ENCODE measurements at regions of chr14 and their contacts with region 1.

Region 1: DNA sequence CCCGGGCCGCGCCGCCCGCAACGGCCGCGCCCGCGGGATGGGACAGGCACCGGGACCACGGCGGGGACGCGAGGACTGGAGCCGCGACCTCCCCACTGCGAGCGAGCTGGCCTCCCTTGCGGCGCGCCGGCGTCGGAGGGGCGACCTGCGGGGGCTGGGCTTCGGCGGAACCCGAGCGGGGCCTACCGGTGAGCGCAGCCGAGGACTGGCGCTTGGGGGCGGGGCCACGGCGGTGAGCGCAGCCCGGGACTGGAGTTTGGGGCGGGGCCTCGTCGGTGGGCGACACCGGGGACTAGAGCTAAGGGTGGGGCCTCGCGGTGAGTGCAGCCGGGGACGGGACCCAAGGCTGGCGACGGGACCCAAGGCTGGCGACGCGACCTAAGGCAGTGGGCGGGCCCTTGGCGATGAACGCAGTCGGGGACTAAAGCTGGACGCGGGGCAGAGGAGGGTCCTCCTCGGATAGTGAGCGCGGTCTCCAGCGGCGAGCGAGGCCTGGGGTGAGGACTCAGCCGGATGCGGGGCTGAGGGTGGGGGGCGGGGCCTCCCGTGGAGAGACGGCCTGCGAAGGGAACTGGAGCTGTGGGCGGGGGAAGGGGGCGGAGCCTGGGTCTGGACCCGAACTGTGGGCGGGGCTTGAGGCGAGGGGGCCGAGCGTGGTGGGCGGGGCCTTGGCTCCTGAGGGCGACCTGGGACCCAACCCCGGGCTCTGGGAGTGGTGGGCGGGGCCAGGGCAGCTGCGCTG is at the start of gene BRF1:
- DNase-seq: peak; percentile 95 to 100 (median 98)
- ATAC-seq: peak; percentile 88
- H3K4me3 ChIP-seq: peak within 1 kb of the TSS; percentile 71
- H3K4me3 Mint-ChIP-seq: peak within 1 kb of the TSS; percentile 98
- H3K27ac ChIP-seq: peak within 1 kb of the TSS; percentile 79 to 88
- H3K27ac Mint-ChIP-seq: peak within 1 kb of the TSS; percentile 85
- H3K4me1 ChIP-seq: peaks cover 37% of the 10 kb centered on the region
- H3K4me1 Mint-ChIP-seq: peaks cover 46% of the 10 kb centered on the region
- H3K27me3 ChIP-seq: no peaks in the 10 kb centered on the region
- H3K27me3 Mint-ChIP-seq: no peaks in the 10 kb centered on the region
- CTCF ChIP-seq: no peak
- total RNA-seq, gene BRF1: 77.4 to 77.7 TPM

Region 2: GRCh38 chr14:105059035-105059924 is 241.7 kb before region 1 on chr14:
- CTCF ChIA-PET with region 1: no interaction called
- POLR2A ChIA-PET with region 1: no interaction called
- intact Hi-C with region 1: no loop called
- DNase-seq: peak in 11 of 14 experiments; percentile 27 to 86 (median 74)
- ATAC-seq: peak; percentile 77
- H3K4me3 ChIP-seq: peak overlapping the region; percentile 82
- H3K4me3 Mint-ChIP-seq: peak overlapping the region; percentile 89
- H3K27ac ChIP-seq: peak overlapping the region; percentile 86 to 95
- H3K27ac Mint-ChIP-seq: peak overlapping the region; percentile 91
- H3K4me1 ChIP-seq: peaks cover 63% of the 10 kb centered on the region
- H3K4me1 Mint-ChIP-seq: peaks cover 53% of the 10 kb centered on the region
- H3K27me3 ChIP-seq: no peaks in the 10 kb centered on the region
- H3K27me3 Mint-ChIP-seq: no peaks in the 10 kb centered on the region
- CTCF ChIP-seq: peak; percentile 35

Region 3: DNA sequence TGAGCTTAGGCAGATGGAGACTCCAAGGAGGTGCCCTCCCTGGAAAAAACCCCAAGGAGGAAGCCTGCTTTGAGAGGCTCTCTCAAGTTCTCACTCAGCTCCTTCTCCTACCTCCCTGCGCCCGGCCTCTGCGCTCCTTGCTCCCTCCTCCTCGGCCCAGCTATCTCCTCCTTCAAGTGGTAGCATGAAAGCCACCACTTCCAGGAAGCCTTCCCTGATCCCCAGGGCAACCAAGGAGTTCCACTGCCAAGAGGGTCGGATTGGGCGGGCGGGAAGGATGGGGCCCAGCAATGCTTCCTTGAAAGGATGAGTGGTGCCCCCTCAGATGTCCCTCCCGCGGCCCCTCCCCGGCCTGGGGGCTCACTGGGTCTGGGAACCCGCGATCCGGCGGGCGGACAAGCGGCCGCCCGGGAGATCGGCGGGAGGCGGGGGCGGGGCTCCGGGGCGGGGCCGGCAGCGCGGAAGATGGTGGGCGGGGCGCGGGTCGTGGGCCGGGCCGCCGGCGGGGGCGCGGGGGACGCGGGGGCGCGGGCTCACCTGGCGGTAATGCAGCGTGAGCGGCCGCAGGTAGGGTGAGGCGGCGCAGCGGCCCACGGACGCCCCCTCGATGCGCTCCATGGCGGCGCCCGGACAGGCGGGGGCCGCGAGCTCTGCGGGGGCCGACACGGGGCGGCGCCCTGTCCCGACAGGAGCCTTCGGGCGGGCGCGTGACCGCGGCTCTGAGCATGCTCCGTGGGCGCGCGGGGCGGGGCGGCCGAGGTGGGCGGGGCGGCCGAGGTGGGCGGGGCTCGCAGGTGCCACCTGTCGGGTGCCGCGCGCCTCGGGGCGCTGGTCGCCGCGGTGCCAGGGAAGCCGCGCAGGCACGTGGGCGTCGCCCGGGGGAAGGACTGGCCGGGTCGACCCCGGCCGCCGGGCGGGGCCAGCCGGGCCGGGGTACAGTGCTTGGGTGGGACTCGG is 120.1 kb before region 1 on chr14 and contains the start of gene NUDT14:
- CTCF ChIA-PET with region 1: no interaction called
- POLR2A ChIA-PET with region 1: interaction called, 6 read pairs
- intact Hi-C with region 1: loop called in 1 of 2 experiments (anchors 1 kb)
- DNase-seq: peak; percentile 73 to 96 (median 88)
- ATAC-seq: peak; percentile 93
- H3K4me3 ChIP-seq: peak within 1 kb of the TSS; percentile 55
- H3K4me3 Mint-ChIP-seq: peak within 1 kb of the TSS; percentile 78
- H3K27ac ChIP-seq: no peak within 1 kb of the TSS
- H3K27ac Mint-ChIP-seq: no peak within 1 kb of the TSS
- H3K4me1 ChIP-seq: peaks cover 45% of the 10 kb centered on the region
- H3K4me1 Mint-ChIP-seq: peaks cover 7% of the 10 kb centered on the region
- H3K27me3 ChIP-seq: no peaks in the 10 kb centered on the region
- H3K27me3 Mint-ChIP-seq: no peaks in the 10 kb centered on the region
- CTCF ChIP-seq: no peak
- total RNA-seq, gene NUDT14: 9.0 to 9.2 TPM

Region 4: DNA sequence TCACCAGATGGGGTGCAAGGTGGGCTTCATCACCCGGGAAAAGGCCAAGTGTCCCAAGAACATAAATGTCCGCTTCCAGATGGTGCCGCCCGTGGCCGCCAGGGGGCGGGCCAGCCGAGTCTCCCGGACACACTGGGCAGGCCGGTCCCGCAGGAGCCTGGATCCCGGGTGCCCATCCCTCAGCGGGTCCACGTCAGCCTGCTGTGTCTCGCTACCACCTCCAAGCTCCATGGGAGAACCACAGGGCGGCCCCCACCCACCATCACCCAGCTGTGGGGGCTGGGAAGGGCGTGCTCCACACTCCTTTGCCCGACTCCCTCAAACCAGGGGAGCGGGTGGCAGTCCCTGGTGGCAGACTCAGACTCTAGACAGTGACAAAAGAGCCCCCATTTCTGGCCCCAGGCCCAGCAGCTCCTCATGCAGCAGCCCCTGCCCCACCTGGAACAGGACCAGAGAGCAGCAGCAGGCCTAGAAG is 97.9 kb before region 1 on chr14:
- CTCF ChIA-PET with region 1: no interaction called
- POLR2A ChIA-PET with region 1: interaction called, 3 read pairs
- intact Hi-C with region 1: loop called in 1 of 2 experiments (anchors 5 kb)
- DNase-seq: peak; percentile 40 to 76 (median 52)
- ATAC-seq: peak; percentile 48
- H3K4me3 ChIP-seq: no peak overlapping the region
- H3K4me3 Mint-ChIP-seq: no peak overlapping the region
- H3K27ac ChIP-seq: no peak overlapping the region
- H3K27ac Mint-ChIP-seq: no peak overlapping the region
- H3K4me1 ChIP-seq: peaks cover 26% of the 10 kb centered on the region
- H3K4me1 Mint-ChIP-seq: peaks cover 9% of the 10 kb centered on the region
- H3K27me3 ChIP-seq: peaks cover 22 to 27% of the 10 kb centered on the region in 2 experiments
- H3K27me3 Mint-ChIP-seq: peaks cover 31% of the 10 kb centered on the region
- CTCF ChIP-seq: peak; percentile 97

Region 5: GRCh38 chr14:105248368-105248756 is 52.6 kb before region 1 on chr14 and contains the start of gene BTBD6:
- CTCF ChIA-PET with region 1: interaction called, 6 read pairs
- POLR2A ChIA-PET with region 1: interaction called, 32 read pairs
- intact Hi-C with region 1: no loop called
- DNase-seq: peak; percentile 76 to 96 (median 86)
- ATAC-seq: peak; percentile 88
- H3K4me3 ChIP-seq: peak within 1 kb of the TSS; percentile 66
- H3K4me3 Mint-ChIP-seq: peak within 1 kb of the TSS; percentile 87
- H3K27ac ChIP-seq: peak within 1 kb of the TSS; percentile 33 to 53
- H3K27ac Mint-ChIP-seq: peak within 1 kb of the TSS; percentile 82
- H3K4me1 ChIP-seq: peaks cover 27% of the 10 kb centered on the region
- H3K4me1 Mint-ChIP-seq: peaks cover 27% of the 10 kb centered on the region
- H3K27me3 ChIP-seq: no peaks in the 10 kb centered on the region
- H3K27me3 Mint-ChIP-seq: no peaks in the 10 kb centered on the region
- CTCF ChIP-seq: no peak
- total RNA-seq, gene BTBD6: 36.9 to 37.6 TPM

Measured in CD4-positive, alpha-beta T cell (primary cell).